HEK293T (cell line): ENCODE measurements at regions of chr15 and their contacts with region 1.

Region 1: DNA sequence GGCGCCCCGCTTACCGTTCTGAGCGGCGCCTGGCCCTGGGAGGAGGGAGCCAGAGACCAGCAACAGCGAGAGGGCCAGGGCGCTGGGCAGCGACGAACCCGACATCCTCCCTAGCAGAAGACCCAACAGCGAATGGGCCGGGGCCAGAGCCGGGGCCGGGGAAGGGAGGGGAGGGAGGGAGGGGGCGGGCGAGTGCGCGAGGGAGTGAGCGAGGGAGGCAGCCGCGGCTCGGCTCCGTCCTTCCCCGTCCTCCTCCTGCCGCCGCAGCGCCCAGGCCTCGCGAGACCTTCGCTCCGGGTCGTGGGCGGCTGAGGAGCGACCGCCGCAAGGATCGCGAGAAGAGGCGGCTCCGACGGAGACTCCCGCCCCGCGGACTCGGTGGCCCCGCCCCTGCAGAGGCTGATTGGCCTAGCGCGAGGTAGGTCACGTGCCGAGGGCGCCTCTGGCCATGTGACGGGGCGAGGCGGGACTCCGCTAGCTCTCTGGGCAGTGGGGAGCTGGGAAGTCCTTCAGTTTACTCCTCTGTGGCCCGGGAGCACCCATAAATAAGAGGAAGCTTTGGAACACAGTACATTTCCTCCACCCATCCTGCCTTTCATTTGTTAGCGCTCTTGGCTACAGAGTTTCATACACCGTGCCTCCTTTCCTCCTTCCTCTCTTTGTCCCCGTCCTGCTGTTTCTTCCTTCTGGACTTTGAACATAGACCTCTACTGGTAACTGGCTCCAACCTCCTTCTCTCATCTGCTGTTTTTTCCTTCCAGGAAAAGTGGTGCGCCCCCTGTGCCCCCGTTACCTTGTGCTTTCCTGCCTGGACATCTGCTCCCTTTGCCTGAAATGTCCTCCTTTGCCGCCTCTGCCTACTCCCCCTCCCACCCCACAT is at the start of gene NPTN:
- DNase-seq: peak; percentile 95

Region 2: DNA sequence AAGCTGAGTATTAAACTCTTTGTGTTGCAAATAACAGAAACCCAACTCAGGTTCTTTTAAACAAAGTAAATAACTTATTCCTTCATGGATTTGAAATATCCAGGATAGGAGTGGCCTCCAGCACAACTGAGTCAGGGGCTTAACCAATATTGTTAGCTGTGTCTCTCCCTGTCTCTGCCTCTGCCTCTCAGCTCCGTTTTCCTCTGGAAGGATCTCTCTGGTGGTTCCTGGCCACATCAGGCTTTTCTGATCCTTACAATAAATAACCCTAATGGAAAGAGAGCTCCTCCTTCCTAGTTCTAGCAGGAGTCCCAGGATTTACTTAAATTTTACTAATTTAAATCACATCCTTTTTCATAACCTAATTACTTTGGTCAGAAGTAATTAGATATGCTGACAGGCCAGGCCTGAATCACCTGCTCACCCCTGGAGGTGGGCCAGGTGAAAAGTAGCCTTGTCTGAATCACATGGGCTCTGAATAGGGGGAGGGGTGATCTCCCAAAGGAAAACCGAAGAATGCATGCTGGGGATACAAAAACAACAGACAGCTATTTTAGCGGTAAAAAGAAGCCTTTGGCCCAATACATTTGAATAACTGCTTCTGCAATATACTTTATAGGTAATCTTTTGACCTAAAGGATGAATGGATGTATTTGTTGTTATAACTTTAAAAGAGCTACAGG is 115.0 kb before region 1 on chr15:
- CTCF ChIA-PET with region 1: no interaction called
- POLR2A ChIA-PET with region 1: no interaction called
- DNase-seq: no peak

Region 3: DNA sequence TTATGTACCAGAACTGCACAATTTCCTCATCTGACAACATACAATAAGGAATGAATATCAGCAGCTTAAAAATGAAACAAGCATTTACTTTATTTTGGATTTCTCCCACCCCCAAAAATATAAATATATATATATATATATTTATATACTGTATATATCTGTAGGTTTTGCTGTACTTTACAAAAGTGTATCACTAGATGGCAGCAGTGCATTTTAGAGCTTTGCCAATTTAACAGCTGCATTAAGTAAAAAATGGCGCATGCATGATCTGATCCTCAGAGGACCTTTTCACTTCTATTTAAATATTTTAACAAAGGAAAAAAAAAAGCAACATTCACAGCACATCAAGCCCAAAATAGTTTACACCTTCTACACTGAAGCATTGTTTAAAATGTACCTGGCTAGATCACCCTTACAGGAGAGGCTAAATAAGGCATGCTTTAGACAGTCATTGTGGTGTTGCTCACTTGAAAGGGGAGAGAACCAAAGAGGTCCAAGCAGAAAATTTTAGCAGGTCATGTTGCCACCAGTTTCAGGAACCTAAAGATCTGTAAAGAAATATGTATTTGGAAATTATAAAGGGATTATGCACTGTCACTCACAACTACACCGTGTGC is 72.7 kb before region 1 on chr15:
- CTCF ChIA-PET with region 1: interaction called, 19 read pairs
- POLR2A ChIA-PET with region 1: interaction called, 8 read pairs
- DNase-seq: peak; percentile 24

Region 4: GRCh38 chr15:73596174-73596573 is 37.2 kb before region 1 on chr15:
- CTCF ChIA-PET with region 1: interaction called, 13 read pairs
- POLR2A ChIA-PET with region 1: interaction called, 7 read pairs
- DNase-seq: no peak

Region 5: DNA sequence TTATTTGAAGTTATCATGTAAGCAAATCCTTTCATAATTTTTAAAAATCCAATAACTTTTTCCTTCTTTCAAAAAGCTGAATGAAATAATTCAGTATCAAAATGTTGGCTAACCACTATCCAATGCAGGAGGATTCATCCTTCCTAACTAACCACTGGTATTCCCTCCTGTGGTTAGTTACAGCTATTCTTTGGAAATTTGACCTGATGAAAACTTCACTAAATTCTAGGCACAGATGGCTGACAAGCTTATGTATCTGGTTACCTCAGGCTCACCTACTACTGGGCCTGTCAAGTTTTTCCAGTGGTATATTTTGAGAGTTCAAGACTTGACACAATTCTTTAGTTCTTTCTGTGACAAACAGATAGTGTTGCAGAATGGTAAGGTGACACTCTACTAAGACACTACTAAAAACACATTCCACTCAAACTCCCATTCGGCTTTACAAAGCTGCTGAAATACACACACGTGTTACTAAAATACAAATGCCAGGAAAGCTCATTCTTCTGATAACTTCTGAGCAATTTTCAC is 16.0 kb before region 1 on chr15:
- CTCF ChIA-PET with region 1: interaction called, 7 read pairs
- POLR2A ChIA-PET with region 1: interaction called, 31 read pairs
- DNase-seq: no peak

Region 6: DNA sequence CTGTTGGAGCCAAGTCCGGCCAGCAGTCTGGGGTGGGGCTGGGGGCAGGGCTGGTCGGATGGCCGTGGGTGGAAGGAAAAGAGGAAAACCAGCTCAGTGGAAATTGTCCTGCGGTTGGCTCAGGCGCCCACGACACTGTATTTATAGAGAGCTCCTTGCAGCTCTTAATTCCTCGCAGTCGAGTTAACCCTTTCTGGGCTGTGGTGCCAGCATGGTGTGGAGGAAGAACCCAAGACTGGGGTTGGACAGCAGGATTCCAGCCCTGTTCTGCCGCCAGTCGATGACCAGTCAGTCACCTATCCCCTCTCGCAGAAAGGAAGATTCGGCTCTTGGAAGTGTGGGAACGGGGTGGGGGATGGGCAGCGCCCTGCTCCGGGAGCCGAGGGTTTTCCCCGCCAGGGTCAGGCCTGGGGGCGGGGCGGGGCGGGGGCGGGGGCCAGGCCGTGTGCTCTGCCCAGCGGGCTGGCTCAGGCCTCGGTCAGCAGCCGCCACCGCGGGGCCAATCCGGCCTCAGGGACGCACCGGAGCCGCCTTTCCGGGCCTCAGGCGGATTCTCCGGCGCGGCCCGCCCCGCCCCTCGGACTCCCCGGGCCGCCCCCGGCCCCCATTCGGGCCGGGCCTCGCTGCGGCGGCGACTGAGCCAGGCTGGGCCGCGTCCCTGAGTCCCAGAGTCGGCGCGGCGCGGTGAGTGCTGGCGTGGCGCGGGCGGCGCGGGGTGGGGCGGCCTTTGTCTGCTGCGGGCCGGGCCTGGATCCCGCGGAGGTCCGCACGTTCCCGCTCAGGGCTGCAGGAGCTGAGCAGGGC is 50.6 kb after region 1 on chr15 and contains the start of gene CD276:
- CTCF ChIA-PET with region 1: interaction called, 22 read pairs
- POLR2A ChIA-PET with region 1: interaction called, 38 read pairs
- DNase-seq: peak; percentile 62

Region 7: GRCh38 chr15:73704869-73705645 is 71.7 kb after region 1 on chr15:
- CTCF ChIA-PET with region 1: interaction called, 87 read pairs
- POLR2A ChIA-PET with region 1: interaction called, 14 read pairs
- DNase-seq: peak; percentile 76